Gastrocnemius medialis (tissue), 4 donors: ENCODE measurements at regions of chr2 and their contacts with region 1.

Region 1: DNA sequence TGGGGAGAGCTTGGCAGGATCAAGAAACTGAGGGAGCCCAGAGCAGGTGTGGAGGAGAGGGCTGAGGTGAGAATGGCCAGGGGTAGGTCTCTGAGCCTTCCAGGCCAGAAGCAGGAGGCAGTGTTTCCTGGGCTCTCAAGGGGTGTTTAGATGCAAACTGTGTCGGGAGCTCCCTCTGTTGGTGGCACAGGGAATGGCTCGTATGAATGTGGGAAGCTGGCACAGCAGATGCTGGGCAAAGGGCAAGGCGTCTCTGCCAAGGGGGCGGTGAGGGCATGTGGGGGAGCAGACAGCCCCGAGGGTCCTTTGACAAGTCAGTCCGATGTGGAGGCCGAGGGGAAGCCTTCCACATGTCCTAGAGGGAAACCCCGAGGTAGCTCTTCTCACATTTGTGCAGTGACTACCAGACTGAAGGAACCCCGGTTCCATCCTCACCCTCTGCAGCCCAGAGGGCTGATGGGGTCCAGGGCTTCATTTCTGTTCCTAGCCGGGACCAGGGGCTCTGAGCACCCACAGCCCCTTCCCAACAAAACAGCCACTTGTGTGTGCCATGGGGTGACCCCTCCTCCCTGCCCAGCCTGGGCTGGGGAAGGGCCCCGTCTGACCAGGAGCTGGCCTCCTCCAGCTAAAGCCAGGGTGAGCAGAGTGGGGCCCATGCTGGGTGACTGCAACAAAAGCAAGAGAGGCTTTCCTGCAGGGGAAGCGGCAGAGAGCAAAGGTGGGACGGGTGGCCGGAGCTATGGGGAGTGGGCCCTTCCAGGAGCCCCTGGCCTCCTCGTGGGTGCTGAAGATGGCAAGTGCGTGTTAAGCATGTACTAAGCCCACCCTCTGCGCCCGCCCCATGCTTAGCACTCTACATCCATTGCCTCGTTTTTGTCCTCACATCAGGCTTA is 103.4 kb downstream of the SEPTIN10 start:
- DNase-seq: peak; percentile 71 to 75
- ATAC-seq: peak; percentile 59 to 76
- H3K4me3 ChIP-seq: no peak overlapping the region
- H3K27ac ChIP-seq: peak overlapping the region in 2 of 4 donors; percentile 59 to 79
- H3K4me1 ChIP-seq: peaks cover 11 to 19% of the 10 kb centered on the region in 2 donors
- H3K27me3 ChIP-seq: no peaks in the 10 kb centered on the region
- CTCF ChIP-seq: peak; percentile 83 to 96 (median 92)
- POLR2A ChIP-seq: no peak

Region 2: GRCh38 chr2:109128048-109128465 is 382.3 kb before region 1 on chr2:
- in situ Hi-C with region 1: loop called (anchors 5 to 10 kb)
- intact Hi-C with region 1: loop called (anchors 1 kb)
- DNase-seq: peak; percentile 71 to 75
- ATAC-seq: peak; percentile 71 to 78
- H3K4me3 ChIP-seq: peak overlapping the region; percentile 63 to 82 (median 70)
- H3K27ac ChIP-seq: peak overlapping the region; percentile 59 to 79 (median 67)
- H3K4me1 ChIP-seq: peaks cover 4 to 7% of the 10 kb centered on the region in 2 donors
- H3K27me3 ChIP-seq: no peaks in the 10 kb centered on the region
- CTCF ChIP-seq: peak; percentile 91 to 95 (median 94)
- POLR2A ChIP-seq: peak; percentile 56 to 61

Region 3: GRCh38 chr2:109284826-109285225 is 225.6 kb before region 1 on chr2:
- in situ Hi-C with region 1: loop called in 1 of 4 experiments (anchors 25 kb)
- intact Hi-C with region 1: no loop called
- DNase-seq: peak in 1 of 2 donors; percentile 31
- ATAC-seq: peak; percentile 35 to 51
- H3K4me3 ChIP-seq: no peak overlapping the region
- H3K27ac ChIP-seq: peak overlapping the region in 2 of 4 donors; percentile 6 to 67
- H3K4me1 ChIP-seq: peaks cover 32 to 40% of the 10 kb centered on the region in 2 donors
- H3K27me3 ChIP-seq: no peaks in the 10 kb centered on the region
- CTCF ChIP-seq: no peak
- POLR2A ChIP-seq: no peak

Region 4: DNA sequence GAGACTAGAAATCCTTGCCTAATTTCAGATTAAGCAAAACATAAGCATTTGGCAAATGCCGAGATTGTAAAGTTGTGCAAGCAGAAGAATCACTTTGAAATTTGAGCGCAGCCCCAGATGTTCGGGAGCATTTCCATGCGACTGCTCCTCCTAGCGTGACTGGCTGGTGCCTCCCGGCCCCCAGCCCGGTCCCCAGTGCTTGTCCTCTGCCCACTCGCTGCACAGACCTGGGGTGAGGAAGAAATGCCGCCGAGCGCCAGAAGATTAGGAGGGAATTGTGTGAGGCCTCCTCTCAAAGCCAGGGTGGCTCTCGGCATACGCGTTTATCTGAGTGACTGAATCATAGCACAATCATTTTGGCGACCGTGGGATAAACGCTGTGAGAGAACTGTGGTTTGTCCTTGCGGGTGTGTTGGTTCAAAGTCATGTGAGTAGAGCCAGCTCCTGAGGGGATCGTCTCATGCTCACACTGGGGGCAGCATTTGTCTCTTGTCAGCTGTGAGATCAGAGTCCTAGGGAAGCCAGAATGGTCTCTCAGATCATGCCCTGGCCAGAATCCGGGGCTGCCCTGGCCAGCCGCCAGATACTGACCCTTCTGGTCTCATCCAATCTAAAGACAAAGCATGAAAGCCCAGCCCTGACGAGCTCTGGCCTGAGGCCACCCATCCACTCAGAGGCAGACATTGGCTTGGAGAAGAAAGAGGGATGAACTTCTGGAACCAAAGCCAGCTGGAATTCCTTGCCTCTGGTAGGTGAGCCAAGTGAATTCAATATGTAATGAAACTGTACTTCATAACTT is 192.0 kb before region 1 on chr2:
- in situ Hi-C with region 1: no loop called
- intact Hi-C with region 1: loop called (anchors 5 kb)
- DNase-seq: peak; percentile 70 to 71
- ATAC-seq: peak; percentile 71 to 73
- H3K4me3 ChIP-seq: peak overlapping the region; percentile 7 to 29 (median 24)
- H3K27ac ChIP-seq: peak overlapping the region; percentile 68 to 77 (median 74)
- H3K4me1 ChIP-seq: peaks cover 50 to 53% of the 10 kb centered on the region in 2 donors
- H3K27me3 ChIP-seq: no peaks in the 10 kb centered on the region
- CTCF ChIP-seq: peak in 2 of 5 experiments; percentile 7 to 36
- POLR2A ChIP-seq: no peak

Region 5: DNA sequence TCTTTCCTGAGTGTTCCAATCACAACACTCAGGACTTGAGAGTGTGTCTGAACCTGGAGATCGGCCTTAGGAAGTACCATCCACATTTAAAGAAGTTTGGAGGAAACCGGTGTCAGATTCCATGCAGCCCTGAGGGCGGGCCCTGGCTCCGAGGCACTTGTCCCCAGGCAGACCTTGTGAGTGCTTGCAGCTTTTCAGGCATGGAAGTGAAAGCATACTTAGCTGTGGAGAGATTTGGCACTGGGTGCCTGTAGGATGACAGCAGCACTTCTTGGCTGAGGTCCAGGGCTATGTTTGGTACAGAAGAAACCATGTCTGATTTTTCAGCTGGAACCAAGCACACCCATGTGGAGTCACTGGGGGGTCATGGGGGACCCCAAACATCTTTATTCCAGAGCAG is 127.4 kb before region 1 on chr2:
- in situ Hi-C with region 1: no loop called
- intact Hi-C with region 1: loop called (anchors 5 kb)
- DNase-seq: peak; percentile 83
- ATAC-seq: peak; percentile 74 to 79
- H3K4me3 ChIP-seq: no peak overlapping the region
- H3K27ac ChIP-seq: peak overlapping the region; percentile 67 to 72 (median 70)
- H3K4me1 ChIP-seq: peaks cover 36 to 52% of the 10 kb centered on the region in 2 donors
- H3K27me3 ChIP-seq: no peaks in the 10 kb centered on the region
- CTCF ChIP-seq: no peak
- POLR2A ChIP-seq: no peak

Region 6: DNA sequence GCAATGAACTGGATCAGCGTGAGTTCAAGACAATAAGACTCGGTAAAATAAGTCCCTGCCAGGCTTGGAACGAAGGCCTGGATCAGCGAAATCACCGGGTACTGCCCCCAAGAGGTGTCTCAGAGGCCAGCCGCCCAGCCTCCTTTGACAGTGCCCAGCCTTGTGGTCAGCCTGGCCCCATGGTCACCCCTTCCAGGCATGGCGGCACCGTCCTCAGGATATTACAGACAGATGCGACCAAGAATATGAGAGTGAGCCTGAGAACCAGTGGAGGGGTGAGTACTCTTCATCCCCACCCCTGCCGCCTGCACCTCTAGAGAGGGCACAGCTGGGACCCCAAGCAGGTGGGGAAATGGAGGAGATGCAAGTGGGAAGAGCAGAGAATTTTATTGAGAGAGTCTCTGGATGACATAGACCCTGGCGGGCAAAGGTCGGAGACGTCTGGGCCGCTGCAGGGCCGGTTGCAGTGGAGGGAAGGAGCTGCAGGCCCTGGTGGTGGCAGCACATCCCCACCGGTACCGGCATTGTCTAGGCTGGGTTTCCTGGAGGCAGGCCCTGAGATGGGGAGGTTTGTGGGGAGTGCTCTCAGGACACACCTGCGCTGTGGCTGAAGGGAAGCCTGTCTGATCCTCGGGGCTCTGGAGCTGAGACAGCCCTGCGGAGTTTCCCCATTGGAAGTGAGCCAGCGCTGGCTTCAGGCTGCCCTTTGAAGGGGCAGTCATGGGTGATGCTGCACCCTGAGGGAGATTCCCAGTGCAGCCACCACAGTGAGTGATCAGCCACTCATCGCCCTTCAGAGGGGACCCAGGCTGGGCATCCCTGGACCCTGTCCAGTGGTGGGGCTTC is 86.6 kb before region 1 on chr2:
- in situ Hi-C with region 1: no loop called
- intact Hi-C with region 1: loop called (anchors 2 kb)
- DNase-seq: peak in 1 of 2 donors; percentile 26
- ATAC-seq: no peak
- H3K4me3 ChIP-seq: no peak overlapping the region
- H3K27ac ChIP-seq: peak overlapping the region in 3 of 4 donors; percentile 56 to 85 (median 78)
- H3K4me1 ChIP-seq: peaks cover 24 to 37% of the 10 kb centered on the region in 2 donors
- H3K27me3 ChIP-seq: no peaks in the 10 kb centered on the region
- CTCF ChIP-seq: no peak
- POLR2A ChIP-seq: no peak